Transverse colon (tissue), 4 donors: ENCODE measurements at regions of chr5 and their contacts with region 1.

Region 1: DNA sequence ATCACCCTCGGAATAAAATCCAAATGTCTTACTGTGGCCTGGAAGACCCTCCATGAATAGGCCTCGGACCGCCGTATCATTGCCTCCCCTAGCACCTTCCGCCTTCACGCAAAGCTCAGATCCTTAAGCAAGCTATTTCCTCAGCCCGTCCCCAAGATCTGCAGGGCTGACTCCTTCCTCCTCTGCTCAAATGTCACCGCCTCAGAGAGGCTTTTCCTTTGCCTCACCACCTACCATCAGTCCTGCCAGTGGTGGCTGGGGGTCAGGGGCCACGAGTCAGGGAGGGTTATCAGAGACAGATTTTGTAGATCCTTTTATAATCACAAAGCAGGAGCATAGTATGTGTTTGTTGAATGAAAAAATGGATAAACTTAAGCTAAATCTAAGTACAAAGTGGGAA is 74.4 kb upstream of the KIF2A start:
- DNase-seq: no peak
- H3K4me3 ChIP-seq: no peak overlapping the region
- H3K27ac ChIP-seq: no peak overlapping the region
- H3K4me1 ChIP-seq: peaks cover 0 to 2% (median 0%) of the 10 kb centered on the region in 4 donors
- H3K27me3 ChIP-seq: no peaks in the 10 kb centered on the region
- CTCF ChIP-seq: no peak
- EP300 ChIP-seq: no peak
- POLR2A ChIP-seq: no peak

Region 2: DNA sequence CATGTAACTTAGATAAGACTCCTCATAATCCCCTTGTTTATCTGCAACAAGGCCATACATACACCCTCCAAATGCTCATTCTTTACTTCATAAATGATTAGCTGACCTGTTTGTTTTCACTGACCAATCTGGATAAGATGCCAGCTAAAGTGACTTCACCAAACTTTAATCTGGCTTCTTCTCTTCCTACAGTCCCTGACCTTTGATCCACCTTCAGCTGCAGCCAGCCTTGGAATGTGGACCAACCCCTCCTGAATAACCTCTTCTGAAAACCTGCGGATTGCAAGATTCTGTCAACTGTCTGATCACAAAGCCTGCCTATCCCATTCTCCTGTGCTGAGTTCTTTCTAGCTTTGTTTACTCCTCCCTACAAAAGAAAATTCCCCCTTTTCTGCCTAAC is 823.8 kb after region 1 on chr5:
- in situ Hi-C with region 1: no loop called
- intact Hi-C with region 1: loop called (anchors 10 kb)
- DNase-seq: no peak
- H3K4me3 ChIP-seq: no peak overlapping the region
- H3K27ac ChIP-seq: no peak overlapping the region
- H3K4me1 ChIP-seq: no peaks in the 10 kb centered on the region
- H3K27me3 ChIP-seq: no peaks in the 10 kb centered on the region
- CTCF ChIP-seq: no peak
- EP300 ChIP-seq: no peak
- POLR2A ChIP-seq: no peak